CD8-positive, alpha-beta memory T cell (primary cell): ENCODE measurements at regions of chr12 and their contacts with region 1.

Region 1: GRCh38 chr12:12427568-12427967 is 70.7 kb downstream of the BORCS5 start:
- DNase-seq: no peak
- H3K4me3 ChIP-seq: no peak overlapping the region
- H3K4me3 Mint-ChIP-seq: no peak overlapping the region
- H3K27ac ChIP-seq: no peak overlapping the region
- H3K27ac Mint-ChIP-seq: peak overlapping the region in 4 of 8 donors; percentile 8 to 34 (median 21)
- H3K4me1 ChIP-seq: no peaks in the 10 kb centered on the region
- H3K4me1 Mint-ChIP-seq: peaks cover 35 to 66% (median 62%) of the 10 kb centered on the region in 3 donors
- H3K27me3 ChIP-seq: no peaks in the 10 kb centered on the region
- H3K27me3 Mint-ChIP-seq: no peaks in the 10 kb centered on the region

Region 2: GRCh38 chr12:12224240-12224940 is 203.2 kb before region 1 on chr12:
- CTCF ChIA-PET with region 1: no interaction called
- POLR2A ChIA-PET with region 1: no interaction called
- DNase-seq: no peak
- H3K4me3 ChIP-seq: no peak overlapping the region
- H3K4me3 Mint-ChIP-seq: no peak overlapping the region
- H3K27ac ChIP-seq: no peak overlapping the region
- H3K27ac Mint-ChIP-seq: no peak overlapping the region
- H3K4me1 ChIP-seq: no peaks in the 10 kb centered on the region
- H3K4me1 Mint-ChIP-seq: no peaks in the 10 kb centered on the region
- H3K27me3 ChIP-seq: no peaks in the 10 kb centered on the region
- H3K27me3 Mint-ChIP-seq: peaks cover 31 to 61% of the 10 kb centered on the region in 2 donors

Region 3: DNA sequence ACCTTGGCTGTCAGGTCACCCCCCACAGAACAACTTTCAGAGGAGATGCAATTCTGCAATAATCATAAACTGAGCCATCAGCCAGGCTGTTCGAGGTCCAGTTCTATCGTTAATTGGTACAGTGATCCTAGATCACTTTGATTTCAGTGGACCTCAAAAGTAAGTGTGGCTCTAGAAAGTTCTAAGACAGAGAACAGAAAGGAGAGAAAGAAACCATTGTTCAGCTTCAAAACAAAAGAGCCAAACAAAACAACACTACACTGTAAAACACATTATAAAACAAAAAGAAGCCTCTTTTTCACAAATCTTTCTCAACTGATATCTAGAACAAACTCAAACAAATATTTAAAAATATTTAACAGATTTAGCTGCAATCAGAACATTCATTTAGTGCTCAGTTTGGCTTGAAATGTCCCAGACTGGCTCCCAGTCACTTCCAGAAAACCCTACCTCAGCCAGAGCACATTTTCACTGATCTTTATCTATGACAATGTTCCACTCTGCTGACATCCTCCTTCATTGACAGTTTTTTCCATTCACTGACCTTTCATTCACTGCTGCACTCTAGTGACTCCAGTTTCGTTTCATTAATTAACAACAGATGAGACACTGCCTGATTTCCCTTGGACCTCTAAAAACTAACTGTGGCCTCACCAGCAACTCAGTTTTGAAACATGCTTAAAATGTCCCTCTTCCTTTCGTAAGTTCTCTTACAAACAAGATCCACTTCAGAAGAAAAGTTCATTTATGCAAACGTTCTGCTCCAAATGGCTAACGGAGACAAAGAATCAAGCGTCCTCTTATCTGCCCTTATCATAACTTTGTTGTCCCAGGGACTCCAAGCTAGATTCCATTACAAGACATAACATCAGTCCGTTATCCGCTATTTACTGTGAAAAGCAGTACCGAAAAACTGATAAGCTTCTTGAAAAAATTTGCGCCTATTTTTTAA is 78.3 kb after region 1 on chr12:
- CTCF ChIA-PET with region 1: no interaction called
- POLR2A ChIA-PET with region 1: interaction called, 12 read pairs
- DNase-seq: no peak
- H3K4me3 ChIP-seq: no peak overlapping the region
- H3K4me3 Mint-ChIP-seq: peak overlapping the region in 5 of 7 donors; percentile 21 to 62 (median 37)
- H3K27ac ChIP-seq: no peak overlapping the region
- H3K27ac Mint-ChIP-seq: peak overlapping the region; percentile 35 to 95 (median 84)
- H3K4me1 ChIP-seq: peaks cover 9% of the 10 kb centered on the region
- H3K4me1 Mint-ChIP-seq: peaks cover 60 to 69% (median 67%) of the 10 kb centered on the region in 3 donors
- H3K27me3 ChIP-seq: no peaks in the 10 kb centered on the region
- H3K27me3 Mint-ChIP-seq: no peaks in the 10 kb centered on the region

Region 4: GRCh38 chr12:13011098-13011497 is 583.5 kb after region 1 on chr12:
- CTCF ChIA-PET with region 1: no interaction called
- POLR2A ChIA-PET with region 1: no interaction called
- DNase-seq: no peak
- H3K4me3 ChIP-seq: no peak overlapping the region
- H3K4me3 Mint-ChIP-seq: no peak overlapping the region
- H3K27ac ChIP-seq: no peak overlapping the region
- H3K27ac Mint-ChIP-seq: no peak overlapping the region
- H3K4me1 ChIP-seq: no peaks in the 10 kb centered on the region
- H3K4me1 Mint-ChIP-seq: no peaks in the 10 kb centered on the region
- H3K27me3 ChIP-seq: peaks cover 4% of the 10 kb centered on the region
- H3K27me3 Mint-ChIP-seq: peaks cover 9 to 12% of the 10 kb centered on the region in 2 donors